ENCODE measurements at regions of chr17 and their contacts with region 1.

Region 1: GRCh38 chr17:20300436-20300934 is 166.9 kb downstream of the LGALS9B start:
- DNase-seq: peak in 1 of 2 donors; percentile 78
- H3K4me3 ChIP-seq: no peak overlapping the region
- H3K27ac ChIP-seq: peak overlapping the region; percentile 84 to 89
- H3K4me1 ChIP-seq: peaks cover 12 to 24% of the 10 kb centered on the region in 2 donors
- H3K27me3 ChIP-seq: no peaks in the 10 kb centered on the region
- CTCF ChIP-seq: no peak

Region 2: GRCh38 chr17:20266806-20267458 is 33.6 kb before region 1 on chr17:
- intact Hi-C with region 1: loop called (anchors 2 kb)
- DNase-seq: peak in 1 of 2 donors; percentile 77
- H3K4me3 ChIP-seq: no peak overlapping the region
- H3K27ac ChIP-seq: peak overlapping the region; percentile 87 to 90
- H3K4me1 ChIP-seq: peaks cover 10 to 41% of the 10 kb centered on the region in 2 donors
- H3K27me3 ChIP-seq: no peaks in the 10 kb centered on the region
- CTCF ChIP-seq: no peak

Measured in ascending aorta (tissue), 2 donors.